WTC11 (cell line): ENCODE measurements at regions of chr20 and their contacts with region 1.

Region 1: DNA sequence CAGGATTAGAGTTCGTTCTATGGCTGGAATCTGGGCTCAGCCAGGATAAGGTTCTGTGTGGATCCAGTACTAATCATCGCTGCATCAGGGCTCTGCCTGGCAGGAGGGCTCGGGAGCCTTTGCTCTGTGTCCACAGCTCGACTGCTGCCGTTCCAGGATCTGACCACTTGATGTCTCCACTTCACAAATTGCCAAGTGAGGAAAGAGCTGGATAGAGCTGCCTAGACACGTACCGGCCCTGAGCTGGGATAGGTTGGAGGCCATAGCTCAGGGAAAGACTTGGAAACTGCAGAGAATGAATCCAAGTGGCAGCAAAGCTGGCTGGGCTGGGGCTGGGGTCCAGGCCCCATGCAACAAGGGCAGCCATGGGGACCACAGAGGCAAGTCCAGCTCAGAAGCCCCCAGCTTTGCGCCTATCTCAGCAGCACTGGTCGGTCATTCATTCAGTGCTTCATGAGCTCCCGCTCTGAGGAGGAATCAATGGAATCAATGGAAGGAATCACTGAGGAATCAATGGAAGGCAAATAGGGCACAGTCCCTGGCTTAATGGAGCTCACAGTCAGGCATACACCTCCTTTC is 38.0 kb upstream of the TOP1 start:
- DNase-seq: peak; percentile 84
- ATAC-seq: peak; percentile 100
- H3K4me3 Mint-ChIP-seq: no peak overlapping the region
- H3K27ac Mint-ChIP-seq: peak overlapping the region; percentile 48; the same call in 1 of the 2 replicates
- H3K4me1 Mint-ChIP-seq: peaks cover 13% of the 10 kb centered on the region
- H3K27me3 Mint-ChIP-seq: peaks cover 11% of the 10 kb centered on the region
- CTCF ChIP-seq: 0 out of 2 replicates have a peak, but pooled peaks have one; percentile 5

Region 2: DNA sequence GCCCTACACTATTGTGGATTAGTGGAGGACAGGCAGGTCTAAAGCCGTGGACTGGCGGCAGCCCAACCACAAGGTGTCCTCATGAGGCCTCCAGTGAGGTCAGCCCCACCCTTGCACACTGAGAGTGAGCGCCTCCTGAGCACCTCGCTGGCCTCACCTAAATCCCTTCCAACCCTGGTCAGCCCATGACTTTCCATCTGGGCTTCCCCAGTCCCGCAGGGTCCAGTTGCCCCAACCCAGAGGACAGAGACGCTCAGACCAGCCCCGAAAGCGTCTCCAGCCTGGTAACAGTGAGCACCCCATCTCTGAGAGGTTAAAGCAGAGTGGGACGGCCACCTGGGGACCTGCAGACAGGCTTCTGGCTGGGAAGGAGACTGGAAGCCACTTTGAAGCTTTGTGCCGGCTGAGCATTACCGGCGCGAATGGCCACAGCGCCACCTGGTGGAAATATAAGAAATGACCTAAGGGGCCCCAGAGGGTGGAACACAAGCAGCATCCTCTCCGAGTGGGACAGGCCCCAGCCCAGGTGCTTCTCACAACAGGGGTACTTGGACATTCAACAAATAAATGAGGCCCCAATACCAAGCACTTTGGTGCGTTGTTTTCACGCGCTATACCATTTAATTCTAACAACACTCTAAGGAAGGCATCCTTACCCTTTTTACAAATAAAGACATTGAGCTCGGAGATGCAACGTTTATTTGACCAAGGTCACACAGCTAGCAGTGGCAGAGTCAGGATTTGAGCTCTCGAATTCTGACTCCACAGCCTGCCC is 27.7 kb before region 1 on chr20:
- CTCF ChIA-PET with region 1: interaction called, 17 read pairs
- POLR2A ChIA-PET with region 1: no interaction called
- DNase-seq: peak; percentile 81
- ATAC-seq: peak; percentile 88
- H3K4me3 Mint-ChIP-seq: no peak overlapping the region
- H3K27ac Mint-ChIP-seq: no peak overlapping the region
- H3K4me1 Mint-ChIP-seq: 0 out of 2 replicates have a peak, but pooled peaks cover 2% of the 10 kb centered on the region
- H3K27me3 Mint-ChIP-seq: no peaks in the 10 kb centered on the region
- CTCF ChIP-seq: peak; percentile 96

Region 3: DNA sequence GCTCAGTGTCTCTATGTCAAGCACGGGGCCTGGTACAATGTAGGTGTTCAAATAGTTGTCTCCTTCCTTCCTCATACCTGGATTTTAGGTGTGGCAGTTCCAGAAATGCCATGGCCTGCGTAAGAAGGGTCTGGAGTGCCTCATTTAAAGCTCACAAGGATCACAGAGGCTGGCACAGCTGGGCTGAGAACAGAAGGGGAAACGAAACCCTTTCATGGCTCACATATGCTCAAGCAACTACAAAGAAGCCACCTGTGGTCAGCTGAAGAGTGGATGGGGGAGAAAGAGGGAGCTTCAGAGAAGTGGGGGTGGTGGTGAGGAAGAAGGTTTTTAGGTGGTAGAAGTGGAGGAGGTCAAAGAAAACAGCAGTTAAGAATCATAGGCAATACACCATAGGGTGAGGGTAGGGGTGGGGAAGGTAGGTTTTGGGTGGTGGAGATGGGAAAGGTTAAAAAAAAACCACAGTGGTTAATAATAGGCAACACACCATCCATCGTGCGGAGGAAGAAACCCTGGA is 21.0 kb after region 1 on chr20:
- CTCF ChIA-PET with region 1: interaction called, 13 read pairs
- POLR2A ChIA-PET with region 1: no interaction called
- DNase-seq: no peak
- ATAC-seq: no peak
- H3K4me3 Mint-ChIP-seq: no peak overlapping the region
- H3K27ac Mint-ChIP-seq: no peak overlapping the region
- H3K4me1 Mint-ChIP-seq: peaks cover 20% of the 10 kb centered on the region
- H3K27me3 Mint-ChIP-seq: peaks cover 9% of the 10 kb centered on the region
- CTCF ChIP-seq: no peak

Region 4: GRCh38 chr20:41034239-41034638 is 43.6 kb after region 1 on chr20:
- CTCF ChIA-PET with region 1: interaction called, 13 read pairs
- POLR2A ChIA-PET with region 1: no interaction called
- DNase-seq: no peak
- ATAC-seq: no peak
- H3K4me3 Mint-ChIP-seq: no peak overlapping the region
- H3K27ac Mint-ChIP-seq: no peak overlapping the region
- H3K4me1 Mint-ChIP-seq: peaks cover 87% of the 10 kb centered on the region
- H3K27me3 Mint-ChIP-seq: peaks cover 77% of the 10 kb centered on the region
- CTCF ChIP-seq: no peak

Region 5: GRCh38 chr20:41078329-41078728 is 87.7 kb after region 1 on chr20:
- CTCF ChIA-PET with region 1: interaction called, 41 read pairs
- POLR2A ChIA-PET with region 1: no interaction called
- DNase-seq: no peak
- ATAC-seq: peak; percentile 32; the same call in 1 of the 2 replicates
- H3K4me3 Mint-ChIP-seq: no peak overlapping the region
- H3K27ac Mint-ChIP-seq: no peak overlapping the region
- H3K4me1 Mint-ChIP-seq: peaks cover 6% of the 10 kb centered on the region; the same call in 1 of the 2 replicates
- H3K27me3 Mint-ChIP-seq: no peaks in the 10 kb centered on the region
- CTCF ChIP-seq: no peak

Region 6: DNA sequence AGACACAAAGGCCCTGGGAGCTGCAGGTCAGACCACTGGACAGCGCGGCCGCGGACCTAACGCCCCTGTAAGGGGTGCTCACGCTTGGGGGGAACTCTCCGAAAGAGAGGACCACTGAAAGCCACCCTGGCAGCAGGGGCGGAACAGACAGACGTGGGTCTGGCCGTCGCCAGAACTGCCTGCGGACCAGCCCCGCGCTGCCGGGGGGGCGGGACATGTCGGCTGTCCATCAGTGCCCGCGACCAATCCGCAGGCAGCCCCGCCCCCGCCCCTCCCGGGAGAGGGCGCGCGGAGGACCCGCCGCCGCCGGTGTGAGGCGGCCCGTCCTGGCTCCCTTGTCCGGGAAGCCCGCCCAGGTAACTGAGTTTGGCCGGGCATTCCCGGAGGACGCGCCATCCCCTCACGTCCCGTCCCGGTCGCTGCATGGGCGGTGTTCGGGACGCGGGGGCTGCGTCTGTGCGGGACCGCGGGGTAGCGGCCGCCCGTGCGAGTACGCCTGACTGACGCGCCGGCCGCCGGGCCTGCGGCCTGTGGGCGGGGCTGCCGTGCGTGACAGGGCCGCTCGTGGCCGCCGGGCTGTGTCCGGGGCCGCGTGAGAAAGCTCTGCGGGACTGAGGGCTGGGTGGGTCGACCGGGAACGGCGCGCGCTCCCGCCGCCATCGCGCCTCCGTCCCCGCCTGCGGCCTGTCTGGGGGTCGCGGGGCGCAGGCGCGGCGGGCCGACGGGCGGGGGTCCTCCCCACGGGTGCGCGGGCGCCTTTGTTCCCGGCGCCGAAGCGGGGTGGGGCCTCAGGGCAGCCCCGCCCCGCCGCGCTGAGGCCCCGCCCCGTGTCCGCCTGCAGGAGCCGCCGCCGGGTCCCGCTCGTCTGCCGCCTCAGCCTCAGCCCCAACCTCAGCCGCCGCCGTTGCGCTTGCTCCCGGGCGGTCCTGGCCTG is 146.3 kb after region 1 on chr20 and contains the start of gene PLCG1:
- CTCF ChIA-PET with region 1: interaction called, 28 read pairs
- POLR2A ChIA-PET with region 1: no interaction called
- DNase-seq: peak; percentile 92
- ATAC-seq: peak; percentile 67
- H3K4me3 Mint-ChIP-seq: peak within 1 kb of the TSS; percentile 89
- H3K27ac Mint-ChIP-seq: peak within 1 kb of the TSS; percentile 83
- H3K4me1 Mint-ChIP-seq: peaks cover 50% of the 10 kb centered on the region
- H3K27me3 Mint-ChIP-seq: peaks cover 13% of the 10 kb centered on the region
- CTCF ChIP-seq: no peak
- total RNA-seq, gene PLCG1: 177 to 201 TPM (median 194 TPM) in 3 replicates